Activated CD4-positive, alpha-beta memory T cell treated with anti-CD3 and anti-CD28 coated beads for 36 hours (primary cell): ENCODE measurements at regions of chr16 and their contacts with region 1.

Region 1: GRCh38 chr16:69424053-69424934 is at the start of gene CYB5B:
- DNase-seq: peak; percentile 98
- H3K4me3 Mint-ChIP-seq: peak within 1 kb of the TSS; percentile 98
- H3K27ac Mint-ChIP-seq: peak within 1 kb of the TSS; percentile 96
- H3K4me1 Mint-ChIP-seq: peaks cover 40% of the 10 kb centered on the region
- H3K27me3 Mint-ChIP-seq: no peaks in the 10 kb centered on the region
- total RNA-seq, gene CYB5B: 147 to 152 TPM

Region 2: DNA sequence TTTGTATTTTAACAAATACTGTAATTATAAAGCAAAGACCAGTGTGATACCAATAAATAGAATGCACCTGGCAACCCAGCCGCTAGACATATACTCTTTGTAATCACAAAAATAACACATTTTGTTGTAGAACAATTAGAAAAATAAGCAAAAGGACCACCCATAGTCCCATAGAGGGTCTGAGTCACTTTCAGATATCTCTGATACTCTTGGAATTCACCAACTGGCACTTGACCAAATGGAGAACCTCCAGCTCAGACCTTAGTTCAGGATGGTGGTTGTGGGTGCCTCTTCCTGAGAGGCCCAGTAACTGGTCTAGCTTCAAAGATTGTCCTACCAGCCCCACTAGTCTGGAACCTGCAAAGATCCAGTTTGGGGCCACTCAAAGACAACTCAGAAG is 37.7 kb before region 1 on chr16:
- CTCF ChIA-PET with region 1: no interaction called
- POLR2A ChIA-PET with region 1: interaction called, 3 read pairs
- intact Hi-C with region 1: loop called (anchors 1 kb)
- DNase-seq: no peak
- H3K4me3 Mint-ChIP-seq: peak overlapping the region; percentile 93
- H3K27ac Mint-ChIP-seq: no peak overlapping the region
- H3K4me1 Mint-ChIP-seq: peaks cover 28% of the 10 kb centered on the region
- H3K27me3 Mint-ChIP-seq: no peaks in the 10 kb centered on the region

Region 3: DNA sequence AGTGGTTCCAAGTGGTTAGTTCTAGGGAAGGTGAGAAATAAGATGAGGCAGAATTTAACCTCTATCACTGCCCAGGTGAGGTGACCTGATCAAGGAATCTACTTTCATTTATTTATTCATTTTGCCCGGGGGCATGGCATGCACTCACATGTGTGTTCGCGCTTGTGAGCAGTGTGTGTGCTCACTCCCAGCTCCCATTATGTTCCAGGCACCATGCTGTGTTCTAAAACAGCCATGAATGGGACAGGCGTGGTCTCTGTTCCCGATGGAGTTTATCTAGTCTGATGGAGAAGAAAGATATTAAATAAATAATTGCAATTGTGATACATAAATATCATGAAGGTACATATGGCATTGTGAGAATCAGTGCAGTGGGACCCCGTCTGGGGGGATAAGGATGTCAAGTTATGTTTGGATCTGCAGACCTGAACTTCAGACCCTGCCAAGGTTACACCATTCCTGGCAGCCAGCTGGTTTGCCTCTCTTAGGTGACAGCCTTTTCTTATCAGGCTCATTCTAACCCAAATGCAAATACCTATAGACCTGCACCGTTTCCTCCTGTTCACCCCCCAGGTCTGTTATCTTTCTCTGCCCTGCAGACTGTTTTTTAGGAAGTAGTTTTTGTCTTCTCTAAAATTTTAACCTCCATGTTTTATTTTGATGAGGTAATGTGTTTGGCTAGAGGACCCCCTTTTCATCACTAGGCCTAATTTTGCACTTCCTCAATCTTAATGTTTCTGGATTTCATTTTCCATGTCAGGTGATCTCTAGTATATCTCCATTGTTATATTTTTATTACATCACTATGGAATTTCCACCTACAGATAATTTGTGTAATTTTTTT is 11.9 kb after region 1 on chr16:
- CTCF ChIA-PET with region 1: no interaction called
- POLR2A ChIA-PET with region 1: interaction called, 3 read pairs
- intact Hi-C with region 1: loop called (anchors 2 kb)
- DNase-seq: no peak
- H3K4me3 Mint-ChIP-seq: no peak overlapping the region
- H3K27ac Mint-ChIP-seq: no peak overlapping the region
- H3K4me1 Mint-ChIP-seq: peaks cover 78% of the 10 kb centered on the region
- H3K27me3 Mint-ChIP-seq: no peaks in the 10 kb centered on the region

Region 4: DNA sequence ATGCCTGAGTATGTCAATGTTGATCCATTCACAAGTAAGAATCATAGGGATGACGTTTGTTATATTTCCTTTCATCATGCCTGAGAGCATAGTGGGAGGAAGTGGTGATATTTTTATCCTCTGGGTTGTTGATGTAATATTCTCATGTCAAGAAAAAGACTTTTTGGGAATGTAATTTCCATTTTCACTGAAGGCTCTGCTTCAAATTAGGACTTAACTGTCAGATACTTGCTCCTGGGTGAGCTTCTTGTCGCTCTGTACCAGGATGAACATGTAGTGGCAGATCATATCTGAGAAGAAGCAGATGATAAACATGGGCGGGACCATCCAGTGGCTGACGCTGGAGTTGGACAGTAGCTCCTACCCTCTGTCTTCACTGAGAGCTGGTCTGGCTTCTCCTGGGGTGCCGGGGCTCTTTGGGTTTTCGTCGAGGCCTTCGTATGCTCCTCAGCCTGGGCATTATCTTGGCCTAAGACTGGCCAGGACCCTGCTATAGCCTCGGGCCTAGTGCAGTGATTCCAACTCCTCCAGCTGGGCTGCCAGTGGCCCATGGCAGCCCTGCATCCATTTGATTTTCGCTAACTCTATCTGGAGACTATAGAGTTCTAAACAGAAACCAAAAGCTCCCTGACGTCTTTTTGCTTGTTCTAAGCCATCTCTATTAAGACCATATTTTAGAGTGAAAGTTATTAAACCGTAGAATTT is 19.8 kb after region 1 on chr16:
- CTCF ChIA-PET with region 1: interaction called, 3 read pairs
- POLR2A ChIA-PET with region 1: interaction called, 7 read pairs
- intact Hi-C with region 1: loop called (anchors 1 kb)
- DNase-seq: peak; percentile 41
- H3K4me3 Mint-ChIP-seq: peak overlapping the region; percentile 62
- H3K27ac Mint-ChIP-seq: peak overlapping the region; percentile 88
- H3K4me1 Mint-ChIP-seq: peaks cover 39% of the 10 kb centered on the region
- H3K27me3 Mint-ChIP-seq: no peaks in the 10 kb centered on the region

Region 5: GRCh38 chr16:69465083-69465721 is 40.9 kb after region 1 on chr16:
- CTCF ChIA-PET with region 1: no interaction called
- POLR2A ChIA-PET with region 1: interaction called, 8 read pairs
- intact Hi-C with region 1: loop called (anchors 2 kb)
- DNase-seq: peak; percentile 26
- H3K4me3 Mint-ChIP-seq: peak overlapping the region; percentile 3
- H3K27ac Mint-ChIP-seq: peak overlapping the region; percentile 44
- H3K4me1 Mint-ChIP-seq: peaks cover 51% of the 10 kb centered on the region
- H3K27me3 Mint-ChIP-seq: no peaks in the 10 kb centered on the region

Region 6: GRCh38 chr16:69726296-69727060 is 302.2 kb after region 1 on chr16 and contains the start of gene NQO1:
- CTCF ChIA-PET with region 1: no interaction called
- POLR2A ChIA-PET with region 1: no interaction called
- intact Hi-C with region 1: loop called (anchors 1 kb)
- DNase-seq: peak; percentile 96
- H3K4me3 Mint-ChIP-seq: peak within 1 kb of the TSS; percentile 87
- H3K27ac Mint-ChIP-seq: peak within 1 kb of the TSS; percentile 86
- H3K4me1 Mint-ChIP-seq: peaks cover 17% of the 10 kb centered on the region
- H3K27me3 Mint-ChIP-seq: no peaks in the 10 kb centered on the region
- total RNA-seq, gene NQO1: 14.9 to 18.2 TPM